Activated CD4-positive, alpha-beta memory T cell treated with anti-CD3 and anti-CD28 coated beads for 36 hours (primary cell): ENCODE measurements at regions of chr6 and their contacts with region 1.

Region 1: DNA sequence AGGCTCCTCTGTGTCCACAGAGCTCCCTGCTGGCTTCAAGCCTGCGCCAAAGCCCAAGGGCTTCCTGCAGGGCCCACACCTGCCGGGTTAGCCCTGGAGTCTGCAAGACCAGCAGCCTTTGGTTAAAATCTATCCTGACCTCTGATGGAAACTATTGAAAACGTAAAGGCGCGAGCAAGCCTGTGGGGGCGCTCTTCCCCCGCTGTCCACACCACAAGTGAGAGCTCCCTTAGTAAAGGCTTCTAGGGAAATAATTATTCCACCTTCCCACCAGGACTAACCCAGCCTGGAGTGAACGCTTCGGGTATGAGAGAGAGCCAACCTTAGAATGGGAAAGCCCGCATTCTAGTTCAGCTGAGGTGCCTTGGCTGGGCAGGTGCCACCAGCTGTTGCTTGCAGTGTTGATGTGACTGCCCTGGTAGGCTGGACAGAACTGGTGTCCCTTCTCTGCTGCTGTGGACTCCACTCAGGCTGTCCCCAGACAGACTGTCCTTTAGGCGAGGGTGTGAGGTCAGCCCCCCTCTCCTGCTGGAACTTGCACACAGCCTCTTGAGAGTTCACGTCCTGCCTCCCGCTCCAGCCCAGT is 68.7 kb downstream of the SYTL3 start:
- DNase-seq: no peak
- H3K4me3 Mint-ChIP-seq: no peak overlapping the region
- H3K27ac Mint-ChIP-seq: no peak overlapping the region
- H3K4me1 Mint-ChIP-seq: peaks cover 55% of the 10 kb centered on the region
- H3K27me3 Mint-ChIP-seq: no peaks in the 10 kb centered on the region

Region 2: GRCh38 chr6:158769771-158770432 is 51.3 kb after region 1 on chr6:
- CTCF ChIA-PET with region 1: no interaction called
- POLR2A ChIA-PET with region 1: no interaction called
- intact Hi-C with region 1: loop called (anchors 5 kb)
- DNase-seq: no peak
- H3K4me3 Mint-ChIP-seq: no peak overlapping the region
- H3K27ac Mint-ChIP-seq: peak overlapping the region; percentile 61
- H3K4me1 Mint-ChIP-seq: peaks cover 41% of the 10 kb centered on the region
- H3K27me3 Mint-ChIP-seq: no peaks in the 10 kb centered on the region